Dendritic cell treated with granulocyte-macrophage colony-stimulating factor and Interleukin-4, amounts not matched to agents 40 ng/mL and 50 ng/mL, for 4 days (primary cell): ENCODE measurements at regions of chr9 and their contacts with region 1.

Region 1: GRCh38 chr9:32571969-32572899 is 725 bp downstream of the NDUFB6 start:
- H3K4me3 Mint-ChIP-seq: peak overlapping the region; percentile 97
- H3K27ac Mint-ChIP-seq: peak overlapping the region; percentile 92
- H3K4me1 Mint-ChIP-seq: peaks cover 19% of the 10 kb centered on the region
- H3K27me3 Mint-ChIP-seq: peaks cover 2% of the 10 kb centered on the region

Region 2: DNA sequence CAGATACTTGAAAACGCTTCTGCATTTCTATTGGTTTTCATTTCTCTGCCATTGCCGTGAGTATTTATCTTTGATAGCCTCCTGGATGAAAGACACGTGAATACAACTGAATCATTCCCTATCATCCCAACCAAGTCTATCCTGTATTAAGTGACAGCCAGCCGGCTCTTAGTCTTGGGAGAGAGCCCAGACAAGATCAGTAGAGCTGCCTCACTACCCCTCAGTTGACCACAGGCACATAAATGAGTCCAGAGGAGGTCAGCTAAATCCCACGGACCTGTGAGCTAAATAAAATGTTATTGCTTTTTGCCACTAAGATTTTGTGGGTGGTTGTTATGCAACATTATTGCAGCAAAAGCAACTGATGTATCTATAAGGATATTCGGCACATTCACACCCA is 826.8 kb before region 1 on chr9:
- intact Hi-C with region 1: no loop called
- H3K4me3 Mint-ChIP-seq: no peak overlapping the region
- H3K27ac Mint-ChIP-seq: no peak overlapping the region
- H3K4me1 Mint-ChIP-seq: no peaks in the 10 kb centered on the region
- H3K27me3 Mint-ChIP-seq: no peaks in the 10 kb centered on the region

Region 3: DNA sequence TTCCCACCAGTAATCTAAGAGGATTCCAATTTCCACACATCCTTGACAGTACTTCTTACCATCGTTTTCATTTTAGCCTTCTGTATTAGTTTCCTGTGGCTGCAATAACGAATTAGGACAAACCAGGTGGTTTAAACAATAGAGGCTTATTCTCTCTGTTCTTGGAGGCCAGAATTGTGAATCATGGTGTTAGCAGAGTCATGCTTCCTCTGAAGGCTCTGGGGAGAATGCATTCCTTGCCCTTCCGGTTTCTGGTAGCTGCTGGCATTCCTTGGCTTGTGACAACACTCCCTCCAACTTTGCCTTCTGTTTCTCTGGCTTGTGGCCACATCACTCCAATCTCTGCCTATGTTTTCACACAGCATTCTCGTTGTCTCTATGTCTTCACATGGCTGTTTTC is 69.8 kb before region 1 on chr9:
- intact Hi-C with region 1: no loop called
- H3K4me3 Mint-ChIP-seq: no peak overlapping the region
- H3K27ac Mint-ChIP-seq: no peak overlapping the region
- H3K4me1 Mint-ChIP-seq: no peaks in the 10 kb centered on the region
- H3K27me3 Mint-ChIP-seq: no peaks in the 10 kb centered on the region

Region 4: DNA sequence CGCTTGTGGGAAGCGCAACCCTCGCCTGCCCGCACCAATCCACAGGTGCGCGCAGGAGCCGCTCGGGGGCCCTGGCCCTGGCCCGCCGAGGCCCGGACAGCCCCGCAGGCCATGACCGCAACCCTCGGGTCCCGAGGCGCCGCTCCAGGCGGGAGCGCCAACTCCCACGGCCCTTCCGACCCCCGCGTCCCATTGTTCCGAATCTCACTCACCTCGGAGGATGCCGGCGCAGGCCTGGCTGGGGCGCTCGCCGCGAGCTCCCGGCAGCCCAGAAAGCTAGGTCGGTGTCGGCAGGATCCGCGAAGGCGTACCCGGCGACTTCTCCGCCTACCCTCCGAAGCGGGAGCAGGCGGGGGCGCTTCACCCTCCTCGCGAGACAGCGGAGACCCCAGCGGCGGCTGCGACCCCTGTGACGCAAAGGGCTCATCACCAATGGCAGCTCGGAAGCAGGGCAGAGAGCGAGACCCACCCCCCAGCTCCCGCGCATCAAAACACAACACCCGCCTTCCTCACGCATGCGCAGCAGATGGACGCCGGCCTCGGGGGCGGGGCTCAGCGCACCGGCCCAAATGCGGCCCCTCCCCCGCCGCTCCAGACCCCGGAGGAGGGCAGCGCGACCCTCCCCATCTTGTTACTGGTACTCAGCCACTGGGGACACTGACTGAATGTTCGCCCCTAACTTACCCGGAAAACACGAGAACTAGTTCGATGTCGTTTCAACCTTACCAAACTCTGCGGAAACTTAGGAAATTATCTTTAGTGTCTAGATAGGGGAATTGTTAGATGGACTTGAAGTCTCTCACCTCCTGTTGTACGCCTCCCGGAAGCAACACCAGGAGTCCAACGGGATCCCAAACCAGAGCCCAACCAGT is 21.4 kb before region 1 on chr9:
- intact Hi-C with region 1: loop called (anchors 1 kb)
- H3K4me3 Mint-ChIP-seq: peak overlapping the region; percentile 83
- H3K27ac Mint-ChIP-seq: peak overlapping the region; percentile 94
- H3K4me1 Mint-ChIP-seq: peaks cover 32% of the 10 kb centered on the region
- H3K27me3 Mint-ChIP-seq: no peaks in the 10 kb centered on the region